ENCODE measurements at regions of chr6 and their contacts with region 1.

Region 1: DNA sequence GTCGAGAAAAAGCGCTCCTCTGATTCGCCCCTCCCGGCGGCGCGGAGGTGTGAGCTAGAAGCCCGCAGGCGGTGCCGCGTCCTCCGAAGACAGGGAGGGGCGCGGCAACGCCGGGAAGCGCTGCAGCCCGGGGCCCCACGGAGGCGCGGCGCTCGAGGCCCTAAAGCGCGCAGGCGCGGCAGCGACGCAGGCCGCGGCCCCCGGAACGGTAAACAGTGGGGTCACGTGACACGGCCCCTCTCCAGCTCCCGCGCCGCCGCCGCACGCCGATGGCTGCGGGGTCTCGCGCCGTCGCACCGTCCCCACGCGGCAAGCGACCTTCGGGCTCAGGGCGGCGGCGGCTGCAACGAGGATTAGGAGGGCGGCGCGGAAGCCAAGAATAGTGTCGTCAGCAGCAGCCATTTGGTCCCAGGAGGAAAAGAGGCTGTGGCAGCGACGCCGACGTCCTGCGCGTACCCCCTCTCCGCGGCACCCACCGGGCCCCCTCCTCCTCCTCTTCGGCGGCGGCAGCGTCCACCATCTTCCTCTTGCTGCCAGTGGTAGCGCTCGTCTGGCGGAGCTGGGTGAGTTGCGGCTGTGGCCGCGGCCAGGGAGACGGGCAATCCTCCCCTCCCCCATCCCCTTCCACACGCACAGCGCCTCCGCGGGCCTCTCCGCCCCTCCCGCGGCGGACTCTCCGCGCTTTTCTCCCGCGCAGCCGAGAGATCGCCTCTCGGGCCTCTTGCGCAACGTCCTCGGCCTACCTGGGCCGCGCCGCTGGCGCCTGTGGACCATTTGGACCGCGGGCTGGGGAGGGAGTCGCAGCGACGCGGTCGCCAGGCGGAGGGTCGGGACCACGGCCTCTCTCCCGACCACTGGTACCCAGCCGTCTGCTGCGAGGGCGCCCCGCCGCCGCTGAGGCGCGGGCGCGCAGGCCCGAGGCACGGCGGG is at the start of gene PHF3:
- DNase-seq: peak; percentile 94
- total RNA-seq, gene PHF3: 38.8 TPM

Region 2: GRCh38 chr6:63509652-63510352 is 126.1 kb before region 1 on chr6:
- intact Hi-C with region 1: no loop called
- DNase-seq: no peak

Region 3: DNA sequence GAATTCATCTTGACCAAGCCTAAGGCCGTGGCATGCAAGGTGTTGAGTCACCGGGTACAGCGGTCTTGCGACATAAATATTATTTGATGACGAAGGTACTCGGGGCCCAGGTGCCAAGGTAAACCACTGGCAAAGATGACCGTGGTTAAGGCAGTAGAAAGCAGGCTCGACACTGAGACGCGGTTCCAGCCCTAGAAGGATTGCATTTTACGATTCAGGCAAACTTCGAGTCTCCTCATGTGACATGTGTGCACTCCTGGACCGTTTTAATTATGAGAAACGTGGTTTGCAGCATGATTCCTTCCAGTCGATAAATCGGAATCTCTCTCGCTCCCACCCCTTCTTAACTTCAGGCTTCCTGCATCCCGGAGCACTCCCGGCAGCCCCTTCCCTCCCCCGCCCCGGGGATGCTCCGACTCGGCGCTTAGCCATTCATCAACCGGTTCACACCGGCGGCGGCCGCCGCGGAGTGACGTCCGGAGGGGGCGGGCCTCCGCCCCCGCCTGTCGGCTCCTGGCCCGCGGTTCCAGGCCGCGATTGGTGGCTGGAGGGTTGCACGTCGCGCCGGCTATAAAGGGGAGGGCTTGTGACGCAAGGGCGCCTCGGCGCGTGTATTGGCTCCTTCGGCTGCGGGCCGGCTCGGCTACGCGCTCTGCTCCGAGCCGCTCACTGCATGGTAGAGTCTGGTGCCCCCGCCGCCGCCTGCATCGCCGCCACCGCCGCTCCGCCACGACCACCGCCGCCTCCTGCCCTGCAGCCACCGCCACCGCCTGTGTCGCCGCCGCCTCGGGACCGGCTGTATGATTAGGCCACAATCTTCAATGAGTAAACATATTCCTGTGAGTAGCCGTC is 63.7 kb before region 1 on chr6 and contains the starts of genes LOC128125822 and PTP4A1:
- intact Hi-C with region 1: loop called (anchors 2 kb)
- DNase-seq: peak; percentile 99
- total RNA-seq, gene PTP4A1: 42.6 TPM

Region 4: GRCh38 chr6:63689421-63689820 is 53.6 kb after region 1 on chr6:
- intact Hi-C with region 1: no loop called
- DNase-seq: no peak

Measured in cardiac septum (tissue), 1 donor.